ENCODE measurements at regions of chr19 and their contacts with region 1.

Region 1: GRCh38 chr19:1929021-1929742 is 11.8 kb upstream of the CSNK1G2 start:
- DNase-seq: peak; percentile 86
- ATAC-seq: peak; percentile 82
- H3K4me3 Mint-ChIP-seq: peak overlapping the region; percentile 81
- H3K27ac Mint-ChIP-seq: no peak overlapping the region
- H3K4me1 Mint-ChIP-seq: peaks cover 46% of the 10 kb centered on the region
- H3K27me3 Mint-ChIP-seq: no peaks in the 10 kb centered on the region
- CTCF ChIP-seq: peak; percentile 59

Region 2: GRCh38 chr19:1848399-1849131 is 80.6 kb before region 1 on chr19 and contains the start of gene REXO1:
- CTCF ChIA-PET with region 1: no interaction called
- POLR2A ChIA-PET with region 1: no interaction called
- intact Hi-C with region 1: no loop called
- DNase-seq: peak; percentile 98
- ATAC-seq: peak; percentile 74
- H3K4me3 Mint-ChIP-seq: peak within 1 kb of the TSS; percentile 88
- H3K27ac Mint-ChIP-seq: peak within 1 kb of the TSS; percentile 88
- H3K4me1 Mint-ChIP-seq: peaks cover 69% of the 10 kb centered on the region
- H3K27me3 Mint-ChIP-seq: no peaks in the 10 kb centered on the region
- CTCF ChIP-seq: peak; percentile 86
- total RNA-seq, gene REXO1: 56.3 and 69.6 TPM in 2 replicates

Region 3: DNA sequence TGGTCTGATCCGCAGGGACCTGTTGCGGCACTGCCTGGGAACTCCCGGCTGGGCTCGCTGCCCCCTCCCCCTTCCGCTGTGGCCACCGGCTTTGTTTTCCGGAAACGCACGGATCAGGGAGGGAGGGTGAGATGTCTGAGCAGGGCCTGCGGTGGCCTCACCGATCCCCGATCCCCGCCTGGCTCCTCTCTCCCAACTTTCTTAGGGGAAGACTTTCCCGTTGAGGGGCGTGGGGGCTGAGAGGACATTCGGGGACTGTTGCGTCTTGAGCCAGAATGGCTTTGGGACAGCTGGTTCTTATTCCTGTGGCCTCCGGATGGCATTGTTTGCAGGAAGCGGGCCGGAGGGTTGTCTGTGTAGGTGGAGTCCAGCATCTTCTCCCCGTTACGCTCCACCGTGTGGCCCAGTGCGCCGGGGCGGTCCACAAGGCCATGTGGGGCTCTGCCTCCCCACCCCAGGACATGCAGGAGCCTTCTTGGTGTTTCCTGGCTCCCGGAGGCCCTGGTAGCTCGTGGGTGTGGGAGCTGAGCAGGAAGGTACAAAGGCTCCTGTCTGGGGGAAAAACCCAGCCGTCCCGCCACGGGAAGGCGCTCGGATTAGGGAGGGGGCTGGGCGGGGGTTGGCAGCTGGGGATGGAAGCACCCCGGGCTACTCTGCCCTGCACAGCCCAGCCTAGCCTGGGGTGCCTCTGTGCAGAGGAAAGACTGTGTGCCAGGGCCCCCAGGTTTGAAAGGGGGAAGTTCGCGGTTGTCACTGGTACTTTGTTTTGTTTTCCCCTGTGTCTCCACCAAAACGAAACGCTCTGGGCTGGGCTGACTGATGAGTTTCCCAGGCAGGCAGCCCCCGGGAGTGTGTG is 13.1 kb after region 1 on chr19:
- CTCF ChIA-PET with region 1: interaction called, 4 read pairs
- POLR2A ChIA-PET with region 1: interaction called, 15 read pairs
- intact Hi-C with region 1: no loop called
- DNase-seq: peak; percentile 69
- ATAC-seq: peak; percentile 53
- H3K4me3 Mint-ChIP-seq: peak overlapping the region; percentile 91
- H3K27ac Mint-ChIP-seq: peak overlapping the region; percentile 96
- H3K4me1 Mint-ChIP-seq: peaks cover 46% of the 10 kb centered on the region
- H3K27me3 Mint-ChIP-seq: no peaks in the 10 kb centered on the region
- CTCF ChIP-seq: no peak

Region 4: GRCh38 chr19:2371656-2372055 is 442.5 kb after region 1 on chr19:
- CTCF ChIA-PET with region 1: no interaction called
- POLR2A ChIA-PET with region 1: no interaction called
- intact Hi-C with region 1: no loop called
- DNase-seq: no peak
- ATAC-seq: no peak
- H3K4me3 Mint-ChIP-seq: no peak overlapping the region
- H3K27ac Mint-ChIP-seq: no peak overlapping the region
- H3K4me1 Mint-ChIP-seq: no peaks in the 10 kb centered on the region
- H3K27me3 Mint-ChIP-seq: no peaks in the 10 kb centered on the region
- CTCF ChIP-seq: no peak

Region 5: DNA sequence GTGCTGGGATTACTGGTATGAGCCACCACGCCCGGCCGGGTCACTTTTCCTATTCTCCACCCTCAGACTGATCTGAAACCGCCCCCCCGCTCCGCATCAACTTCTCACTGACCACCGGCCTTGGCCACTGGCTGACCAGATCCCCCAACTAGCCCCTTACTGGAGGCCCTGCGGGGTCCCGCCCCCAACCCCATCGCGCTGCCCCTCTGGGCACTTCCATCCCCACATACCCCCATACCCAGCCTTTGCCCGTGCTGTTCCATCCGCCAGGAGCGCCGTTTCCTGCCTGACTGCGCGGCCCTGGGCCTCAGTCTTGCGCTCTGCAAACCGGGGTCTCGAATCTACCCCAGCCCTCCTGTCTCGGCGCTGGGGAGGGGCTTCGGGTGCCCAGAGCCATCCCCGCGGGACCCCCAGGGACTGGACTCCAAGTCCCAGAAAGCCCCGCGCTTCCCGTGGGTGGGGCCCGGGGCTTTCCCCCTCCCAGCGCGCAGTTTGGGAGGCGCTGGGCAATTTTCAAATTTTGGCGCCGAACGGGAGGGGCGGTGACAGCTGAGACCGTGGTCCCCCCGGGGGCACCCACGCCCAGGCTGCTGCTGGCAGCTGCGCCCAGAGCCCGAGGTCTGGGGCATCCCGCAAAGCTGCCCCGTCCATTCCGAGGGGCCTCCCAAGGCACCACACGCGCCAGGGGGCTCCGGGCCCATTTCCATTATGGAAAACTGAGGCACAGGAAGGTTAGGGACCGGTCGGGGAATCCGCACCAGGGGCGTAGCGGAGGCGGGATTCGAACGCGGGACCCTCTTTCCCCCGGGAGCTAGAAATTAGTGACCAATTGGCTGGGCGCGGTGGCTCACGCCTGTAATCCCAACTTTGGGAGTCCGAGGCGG is 532.8 kb after region 1 on chr19:
- CTCF ChIA-PET with region 1: no interaction called
- POLR2A ChIA-PET with region 1: interaction called, 13 read pairs
- intact Hi-C with region 1: no loop called
- DNase-seq: peak; percentile 57
- ATAC-seq: peak; percentile 86
- H3K4me3 Mint-ChIP-seq: peak overlapping the region; percentile 82
- H3K27ac Mint-ChIP-seq: no peak overlapping the region
- H3K4me1 Mint-ChIP-seq: peaks cover 10% of the 10 kb centered on the region
- H3K27me3 Mint-ChIP-seq: no peaks in the 10 kb centered on the region
- CTCF ChIP-seq: no peak